B cell (primary cell): ENCODE measurements at regions of chr5 and their contacts with region 1.

Region 1: DNA sequence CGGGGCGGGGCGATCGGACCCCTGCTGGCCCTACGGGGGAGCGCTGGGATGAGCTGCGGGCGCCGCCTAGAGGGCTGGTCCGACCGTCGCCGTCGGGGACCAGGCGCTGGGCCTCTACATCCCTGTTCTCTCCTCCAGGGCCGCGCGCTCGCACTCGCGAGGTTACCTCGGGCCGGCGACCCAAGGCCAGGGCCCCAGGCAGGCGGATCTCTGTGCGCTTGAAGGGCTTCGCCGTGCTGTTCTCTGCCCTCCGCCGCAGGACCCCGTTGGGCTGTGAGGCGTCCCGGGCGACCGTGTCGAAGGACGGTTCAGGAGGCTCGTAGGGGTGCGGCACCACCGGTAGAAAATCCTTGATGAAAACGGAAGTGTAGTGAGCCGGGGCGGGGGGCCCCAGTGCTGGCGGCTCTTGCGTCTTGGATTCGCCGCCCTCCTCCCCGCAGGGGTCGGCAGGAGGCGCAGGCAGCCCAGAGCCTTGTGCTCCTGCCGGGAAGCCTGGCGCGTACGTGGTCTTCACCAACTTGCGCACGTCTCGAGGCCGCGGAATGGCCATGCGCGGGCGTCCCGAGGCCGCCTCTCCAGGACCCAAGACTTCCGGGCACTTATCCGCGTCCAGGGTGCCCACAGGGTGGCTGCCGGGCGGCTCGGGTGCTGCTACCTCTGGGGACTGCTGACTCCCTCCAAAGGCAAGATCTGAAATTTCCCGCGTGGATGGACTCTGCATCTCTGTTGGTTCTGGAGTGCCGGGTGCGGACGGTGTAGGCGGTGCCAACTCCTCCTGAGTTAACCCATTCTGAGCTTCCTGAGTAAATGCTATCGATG is 2.0 kb downstream of the PROB1 start:
- DNase-seq: peak; percentile 93
- ATAC-seq: peak; percentile 56
- H3K4me3 ChIP-seq: peak overlapping the region; percentile 69 to 90 (median 80)
- H3K4me3 Mint-ChIP-seq: peak overlapping the region; percentile 99
- H3K27ac ChIP-seq: peak overlapping the region; percentile 60 to 65
- H3K27ac Mint-ChIP-seq: peak overlapping the region; percentile 93
- H3K4me1 ChIP-seq: peaks cover 44 to 60% of the 10 kb centered on the region in 2 donors
- H3K4me1 Mint-ChIP-seq: peaks cover 46% of the 10 kb centered on the region
- H3K27me3 ChIP-seq: no peaks in the 10 kb centered on the region
- H3K27me3 Mint-ChIP-seq: no peaks in the 10 kb centered on the region
- CTCF ChIP-seq: peak; percentile 94

Region 2: GRCh38 chr5:138575194-138576015 is 817.5 kb before region 1 on chr5 and contains the start of gene HSPA9:
- CTCF ChIA-PET with region 1: no interaction called
- POLR2A ChIA-PET with region 1: interaction called, 5 read pairs
- intact Hi-C with region 1: loop called (anchors 5 kb)
- DNase-seq: peak; percentile 100
- ATAC-seq: peak; percentile 85
- H3K4me3 ChIP-seq: peak within 1 kb of the TSS; percentile 80 to 98 (median 96)
- H3K4me3 Mint-ChIP-seq: peak within 1 kb of the TSS; percentile 96
- H3K27ac ChIP-seq: peak within 1 kb of the TSS; percentile 99 to 100
- H3K27ac Mint-ChIP-seq: peak within 1 kb of the TSS; percentile 100
- H3K4me1 ChIP-seq: peaks cover 16% of the 10 kb centered on the region in 2 donors
- H3K4me1 Mint-ChIP-seq: peaks cover 30% of the 10 kb centered on the region
- H3K27me3 ChIP-seq: no peaks in the 10 kb centered on the region
- H3K27me3 Mint-ChIP-seq: no peaks in the 10 kb centered on the region
- CTCF ChIP-seq: no peak
- total RNA-seq, gene HSPA9: 139 and 142 TPM in 2 replicates

Region 3: GRCh38 chr5:139088024-139088423 is 304.9 kb before region 1 on chr5:
- CTCF ChIA-PET with region 1: no interaction called
- POLR2A ChIA-PET with region 1: no interaction called
- intact Hi-C with region 1: no loop called
- DNase-seq: no peak
- ATAC-seq: no peak
- H3K4me3 ChIP-seq: no peak overlapping the region
- H3K4me3 Mint-ChIP-seq: no peak overlapping the region
- H3K27ac ChIP-seq: no peak overlapping the region
- H3K27ac Mint-ChIP-seq: no peak overlapping the region
- H3K4me1 ChIP-seq: peaks cover 6 to 8% of the 10 kb centered on the region in 2 donors
- H3K4me1 Mint-ChIP-seq: peaks cover 10% of the 10 kb centered on the region
- H3K27me3 ChIP-seq: no peaks in the 10 kb centered on the region
- H3K27me3 Mint-ChIP-seq: no peaks in the 10 kb centered on the region
- CTCF ChIP-seq: no peak

Region 4: GRCh38 chr5:139273572-139274289 is 119.2 kb before region 1 on chr5:
- CTCF ChIA-PET with region 1: interaction called, 4 read pairs
- POLR2A ChIA-PET with region 1: no interaction called
- intact Hi-C with region 1: loop called (anchors 5 kb)
- DNase-seq: peak; percentile 95
- ATAC-seq: peak; percentile 98
- H3K4me3 ChIP-seq: peak overlapping the region; percentile 61 to 86 (median 75)
- H3K4me3 Mint-ChIP-seq: peak overlapping the region; percentile 92
- H3K27ac ChIP-seq: peak overlapping the region; percentile 62 to 74
- H3K27ac Mint-ChIP-seq: peak overlapping the region; percentile 91
- H3K4me1 ChIP-seq: peaks cover 32 to 44% of the 10 kb centered on the region in 2 donors
- H3K4me1 Mint-ChIP-seq: peaks cover 46% of the 10 kb centered on the region
- H3K27me3 ChIP-seq: no peaks in the 10 kb centered on the region
- H3K27me3 Mint-ChIP-seq: no peaks in the 10 kb centered on the region
- CTCF ChIP-seq: no peak

Region 5: DNA sequence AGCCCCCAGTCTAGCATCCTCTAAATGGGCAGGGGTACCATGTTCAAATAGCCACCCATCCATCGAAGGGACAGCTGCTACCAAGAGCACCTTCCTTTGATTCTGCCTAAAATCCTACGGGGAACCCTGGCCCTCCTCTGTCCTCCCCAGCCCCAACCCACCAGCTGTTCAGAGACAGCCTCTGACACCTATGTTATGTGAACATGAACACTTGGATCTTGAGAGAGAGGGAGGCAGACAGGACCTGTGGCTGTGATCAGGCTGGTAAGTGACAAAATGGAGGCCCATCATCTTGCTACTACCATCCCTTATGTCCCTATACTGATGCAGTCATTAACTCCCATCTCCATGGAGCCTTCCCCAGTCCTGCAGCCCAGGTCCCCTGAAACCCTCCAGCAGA is 18.0 kb before region 1 on chr5:
- CTCF ChIA-PET with region 1: interaction called, 12 read pairs
- POLR2A ChIA-PET with region 1: interaction called, 3 read pairs
- intact Hi-C with region 1: no loop called
- DNase-seq: peak; percentile 10
- ATAC-seq: no peak
- H3K4me3 ChIP-seq: no peak overlapping the region
- H3K4me3 Mint-ChIP-seq: no peak overlapping the region
- H3K27ac ChIP-seq: no peak overlapping the region
- H3K27ac Mint-ChIP-seq: peak overlapping the region; percentile 17
- H3K4me1 ChIP-seq: no peaks in the 10 kb centered on the region
- H3K4me1 Mint-ChIP-seq: peaks cover 3% of the 10 kb centered on the region
- H3K27me3 ChIP-seq: no peaks in the 10 kb centered on the region
- H3K27me3 Mint-ChIP-seq: no peaks in the 10 kb centered on the region
- CTCF ChIP-seq: no peak

Region 6: DNA sequence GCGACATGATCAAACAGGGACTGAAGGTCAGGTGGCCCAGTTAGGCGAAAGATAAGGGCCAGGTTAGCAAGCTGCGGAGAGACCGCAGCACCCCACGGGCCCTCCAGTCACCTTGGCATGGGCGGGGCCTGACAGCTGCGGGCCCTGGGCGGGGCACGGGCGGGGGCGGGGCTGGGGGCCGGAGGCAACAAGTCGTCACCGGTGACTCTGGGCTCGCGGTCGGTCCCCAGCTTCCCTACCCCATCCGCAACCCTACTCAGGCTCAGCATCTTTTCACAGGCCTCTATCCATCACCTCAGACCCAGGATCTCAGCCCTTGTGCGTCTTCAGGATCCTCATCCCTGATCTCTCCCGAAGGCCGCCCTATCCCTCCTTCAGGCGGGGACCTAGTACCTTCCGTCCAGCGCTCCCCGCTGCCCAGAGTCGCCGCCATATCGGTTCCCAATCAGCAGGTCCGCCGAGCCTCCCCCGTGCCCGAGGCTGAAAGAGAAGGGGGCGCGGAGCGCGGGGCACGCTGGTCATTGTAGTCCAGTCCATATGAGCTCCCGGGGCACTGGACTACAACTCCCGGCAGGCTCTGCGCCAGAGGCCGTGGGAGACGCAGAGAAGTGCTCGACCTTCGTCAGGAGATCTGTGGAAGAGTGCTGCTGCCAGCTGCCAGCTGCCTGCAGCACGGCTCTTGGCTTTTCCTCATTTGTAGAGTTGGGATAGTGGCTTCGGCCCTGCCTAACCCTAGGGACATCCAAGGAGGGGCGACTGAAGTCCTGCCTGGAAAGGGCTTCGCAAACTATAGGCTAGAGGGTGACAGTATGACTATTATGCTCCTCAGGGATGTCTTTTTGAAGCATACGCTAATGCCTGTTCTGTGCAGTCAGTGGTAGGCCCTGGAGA is 46.4 kb after region 1 on chr5 and contains the start of gene DNAJC18:
- CTCF ChIA-PET with region 1: interaction called, 3 read pairs
- POLR2A ChIA-PET with region 1: no interaction called
- intact Hi-C with region 1: loop called (anchors 2 kb)
- DNase-seq: peak; percentile 93
- ATAC-seq: peak; percentile 94
- H3K4me3 ChIP-seq: peak within 1 kb of the TSS; percentile 53 to 97 (median 91)
- H3K4me3 Mint-ChIP-seq: peak within 1 kb of the TSS; percentile 97
- H3K27ac ChIP-seq: peak within 1 kb of the TSS; percentile 98 to 100
- H3K27ac Mint-ChIP-seq: peak within 1 kb of the TSS; percentile 99
- H3K4me1 ChIP-seq: peaks cover 11 to 12% of the 10 kb centered on the region in 2 donors
- H3K4me1 Mint-ChIP-seq: peaks cover 16% of the 10 kb centered on the region
- H3K27me3 ChIP-seq: no peaks in the 10 kb centered on the region
- H3K27me3 Mint-ChIP-seq: peaks cover 3% of the 10 kb centered on the region
- CTCF ChIP-seq: no peak
- total RNA-seq, gene DNAJC18: 13.6 and 16.5 TPM in 2 replicates